ENCODE measurements at regions of chr6 and their contacts with region 1.

Region 1: GRCh38 chr6:146827216-146827928 is 228.6 kb downstream of the ADGB start:
- DNase-seq: no peak
- CTCF ChIP-seq: no peak

Region 2: DNA sequence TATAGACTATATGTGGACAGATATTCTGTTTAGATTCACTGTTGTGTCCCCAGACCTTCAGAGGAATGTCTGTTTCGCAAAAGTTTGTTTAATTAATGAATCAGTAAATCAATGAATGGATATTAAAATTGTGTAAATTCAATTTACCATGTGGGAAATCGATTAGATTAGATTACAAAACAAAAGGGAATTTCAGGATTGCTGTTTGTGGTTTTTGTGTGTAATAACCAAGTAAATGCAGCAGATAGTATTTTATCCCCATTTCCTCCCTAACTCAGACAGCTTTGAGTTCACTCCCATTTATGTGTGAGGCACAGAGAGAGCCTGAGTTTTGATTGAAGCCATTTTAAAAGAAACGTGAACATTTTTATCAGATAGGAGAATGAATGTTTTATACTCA is 13.8 kb before region 1 on chr6:
- CTCF ChIA-PET with region 1: interaction called, 12 read pairs
- POLR2A ChIA-PET with region 1: no interaction called
- DNase-seq: no peak
- CTCF ChIP-seq: no peak

Region 3: GRCh38 chr6:146840641-146841040 is 13.3 kb after region 1 on chr6:
- CTCF ChIA-PET with region 1: no interaction called
- POLR2A ChIA-PET with region 1: no interaction called
- DNase-seq: no peak
- CTCF ChIP-seq: no peak